Activated B cell treated with CpG ODN at 0.5 μM for 24 hours (primary cell): ENCODE measurements at regions of chr5 and their contacts with region 1.

Region 1: GRCh38 chr5:40033411-40033810 is 608.6 kb upstream of the DAB2 start:
- DNase-seq: peak; percentile 31
- ATAC-seq: peak; percentile 98
- H3K4me3 Mint-ChIP-seq: peak overlapping the region; percentile 21
- H3K27ac Mint-ChIP-seq: peak overlapping the region; percentile 80
- H3K4me1 Mint-ChIP-seq: peaks cover 36% of the 10 kb centered on the region
- H3K27me3 Mint-ChIP-seq: no peaks in the 10 kb centered on the region
- CTCF ChIP-seq: no peak

Region 2: DNA sequence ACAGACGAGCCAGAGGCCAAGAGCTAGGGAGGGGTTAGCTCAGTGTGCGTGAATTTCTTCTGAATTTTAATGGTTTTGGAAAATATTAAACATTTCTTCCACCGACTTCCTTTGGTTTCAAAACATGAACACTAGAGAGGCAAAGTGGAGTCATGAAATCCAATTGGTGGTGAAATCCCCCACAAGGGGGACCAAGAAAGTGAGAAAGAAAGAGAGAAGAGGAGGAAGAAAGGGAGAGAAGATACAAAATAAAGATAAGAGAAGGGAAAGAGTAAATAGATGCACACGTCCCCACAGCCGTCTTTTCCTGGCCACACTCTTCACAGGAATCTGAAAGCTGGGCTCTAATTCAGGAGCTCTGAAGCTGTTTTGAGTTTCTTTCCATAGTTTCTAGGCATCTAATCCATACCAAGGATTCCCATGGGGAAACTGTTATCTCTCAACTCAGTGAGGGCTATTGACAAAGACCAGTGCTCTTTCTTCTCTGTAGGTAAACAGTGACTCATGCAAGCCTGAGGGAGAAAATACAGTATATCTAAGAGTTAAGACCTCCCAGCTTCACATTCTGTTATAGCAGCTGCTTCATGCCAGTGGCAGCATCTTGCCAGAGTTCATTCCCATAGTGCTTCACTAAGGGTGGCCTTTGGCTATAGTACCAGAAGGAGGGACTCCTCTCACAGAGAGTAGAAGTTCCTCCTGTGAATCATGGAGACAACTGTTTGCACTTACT is 1361.2 kb before region 1 on chr5:
- CTCF ChIA-PET with region 1: no interaction called
- POLR2A ChIA-PET with region 1: no interaction called
- intact Hi-C with region 1: no loop called
- DNase-seq: no peak
- ATAC-seq: no peak
- H3K4me3 Mint-ChIP-seq: no peak overlapping the region
- H3K27ac Mint-ChIP-seq: no peak overlapping the region
- H3K4me1 Mint-ChIP-seq: no peaks in the 10 kb centered on the region
- H3K27me3 Mint-ChIP-seq: no peaks in the 10 kb centered on the region
- CTCF ChIP-seq: no peak

Region 3: GRCh38 chr5:40021007-40021406 is 12.4 kb before region 1 on chr5:
- CTCF ChIA-PET with region 1: no interaction called
- POLR2A ChIA-PET with region 1: no interaction called
- intact Hi-C with region 1: no loop called
- DNase-seq: no peak
- ATAC-seq: no peak
- H3K4me3 Mint-ChIP-seq: no peak overlapping the region
- H3K27ac Mint-ChIP-seq: no peak overlapping the region
- H3K4me1 Mint-ChIP-seq: peaks cover 27% of the 10 kb centered on the region
- H3K27me3 Mint-ChIP-seq: no peaks in the 10 kb centered on the region
- CTCF ChIP-seq: no peak

Region 4: DNA sequence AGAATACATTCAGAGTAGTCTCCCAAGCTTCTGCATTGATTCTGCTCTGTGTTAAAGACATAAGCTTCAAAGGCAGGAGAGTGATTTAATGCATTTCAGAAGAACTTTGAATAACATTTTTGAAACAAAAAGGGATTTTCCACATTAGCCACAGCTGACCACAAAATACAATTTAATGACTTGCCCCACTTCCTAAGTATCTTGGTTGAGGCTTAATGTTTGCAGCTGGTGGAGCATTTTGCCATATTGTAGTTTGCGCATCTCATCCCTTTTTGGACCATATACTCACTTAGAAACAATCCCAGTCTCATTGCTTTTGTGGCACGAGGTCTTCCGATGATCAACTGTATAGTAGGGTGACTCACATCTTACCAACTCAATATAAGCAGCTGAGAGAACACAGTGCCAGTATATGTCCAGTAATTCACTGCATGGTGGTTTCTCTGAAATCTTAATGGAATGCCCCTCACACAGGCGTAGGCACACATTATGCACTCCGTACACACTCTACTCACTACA is 190.5 kb after region 1 on chr5:
- CTCF ChIA-PET with region 1: no interaction called
- POLR2A ChIA-PET with region 1: interaction called, 5 read pairs
- intact Hi-C with region 1: loop called (anchors 1 kb)
- DNase-seq: no peak
- ATAC-seq: peak; percentile 63
- H3K4me3 Mint-ChIP-seq: peak overlapping the region; percentile 21
- H3K27ac Mint-ChIP-seq: peak overlapping the region; percentile 79
- H3K4me1 Mint-ChIP-seq: peaks cover 45% of the 10 kb centered on the region
- H3K27me3 Mint-ChIP-seq: peaks cover 5% of the 10 kb centered on the region
- CTCF ChIP-seq: no peak

Region 5: DNA sequence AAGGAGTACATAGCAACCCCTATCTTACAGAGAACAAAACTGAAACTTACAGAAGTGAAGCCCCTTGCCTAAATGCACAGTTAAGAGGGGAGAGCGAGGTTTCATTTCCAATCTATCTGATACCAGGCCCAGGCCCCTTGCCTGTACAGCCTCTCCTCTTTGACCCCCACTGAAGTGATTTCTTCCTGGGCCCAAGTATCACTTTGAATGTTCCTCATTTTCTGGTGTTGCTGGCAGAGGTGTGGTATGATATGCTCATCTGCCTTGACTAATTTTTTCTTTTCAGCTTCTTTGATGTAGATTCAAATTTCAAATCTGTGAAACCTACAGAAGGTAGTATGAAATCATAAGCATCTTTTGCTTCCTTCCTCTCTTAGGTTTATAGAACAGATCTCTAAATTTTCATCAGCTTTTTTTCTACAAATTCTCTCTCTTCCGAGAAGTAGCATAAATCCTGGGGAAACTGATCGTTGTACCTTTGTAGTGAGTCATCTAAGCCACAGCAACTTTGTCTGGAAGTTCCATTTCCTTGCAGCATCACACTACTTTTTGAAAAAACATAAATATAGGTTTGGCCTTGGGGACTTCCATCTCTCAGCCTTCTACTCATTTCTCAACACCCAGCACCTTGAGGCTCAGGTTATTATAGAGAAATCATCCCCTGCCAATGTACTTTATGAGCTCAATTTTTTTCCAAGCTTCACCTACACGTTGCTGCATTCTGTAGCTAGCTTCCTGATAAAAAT is 243.9 kb after region 1 on chr5:
- CTCF ChIA-PET with region 1: no interaction called
- POLR2A ChIA-PET with region 1: no interaction called
- intact Hi-C with region 1: loop called (anchors 5 kb)
- DNase-seq: no peak
- ATAC-seq: peak; percentile 90
- H3K4me3 Mint-ChIP-seq: peak overlapping the region; percentile 30
- H3K27ac Mint-ChIP-seq: peak overlapping the region; percentile 77
- H3K4me1 Mint-ChIP-seq: peaks cover 30% of the 10 kb centered on the region
- H3K27me3 Mint-ChIP-seq: no peaks in the 10 kb centered on the region
- CTCF ChIP-seq: no peak

Region 6: DNA sequence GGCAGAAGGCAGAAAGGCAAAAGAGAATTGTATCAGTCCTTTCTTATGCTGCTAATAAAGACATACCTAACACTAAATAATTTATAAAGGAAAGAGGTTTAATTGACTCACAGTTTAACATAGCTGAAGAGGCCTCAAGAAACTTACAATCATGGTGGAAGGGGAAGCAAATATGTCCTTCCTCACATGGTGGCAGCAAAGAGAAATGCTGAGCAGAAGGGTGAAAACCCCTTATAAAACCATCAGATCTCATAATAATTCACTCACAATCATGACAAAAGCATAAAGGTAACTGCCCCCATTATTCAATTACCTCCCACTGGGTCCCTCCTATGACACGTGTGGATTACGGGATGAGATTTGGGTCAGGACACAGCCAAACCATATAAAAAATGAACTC is 333.8 kb after region 1 on chr5:
- CTCF ChIA-PET with region 1: no interaction called
- POLR2A ChIA-PET with region 1: no interaction called
- intact Hi-C with region 1: loop called (anchors 5 kb)
- DNase-seq: no peak
- ATAC-seq: peak; percentile 45
- H3K4me3 Mint-ChIP-seq: no peak overlapping the region
- H3K27ac Mint-ChIP-seq: no peak overlapping the region
- H3K4me1 Mint-ChIP-seq: peaks cover 13% of the 10 kb centered on the region
- H3K27me3 Mint-ChIP-seq: no peaks in the 10 kb centered on the region
- CTCF ChIP-seq: no peak